WTC11 (cell line): ENCODE measurements at regions of chr18 and their contacts with region 1.

Region 1: DNA sequence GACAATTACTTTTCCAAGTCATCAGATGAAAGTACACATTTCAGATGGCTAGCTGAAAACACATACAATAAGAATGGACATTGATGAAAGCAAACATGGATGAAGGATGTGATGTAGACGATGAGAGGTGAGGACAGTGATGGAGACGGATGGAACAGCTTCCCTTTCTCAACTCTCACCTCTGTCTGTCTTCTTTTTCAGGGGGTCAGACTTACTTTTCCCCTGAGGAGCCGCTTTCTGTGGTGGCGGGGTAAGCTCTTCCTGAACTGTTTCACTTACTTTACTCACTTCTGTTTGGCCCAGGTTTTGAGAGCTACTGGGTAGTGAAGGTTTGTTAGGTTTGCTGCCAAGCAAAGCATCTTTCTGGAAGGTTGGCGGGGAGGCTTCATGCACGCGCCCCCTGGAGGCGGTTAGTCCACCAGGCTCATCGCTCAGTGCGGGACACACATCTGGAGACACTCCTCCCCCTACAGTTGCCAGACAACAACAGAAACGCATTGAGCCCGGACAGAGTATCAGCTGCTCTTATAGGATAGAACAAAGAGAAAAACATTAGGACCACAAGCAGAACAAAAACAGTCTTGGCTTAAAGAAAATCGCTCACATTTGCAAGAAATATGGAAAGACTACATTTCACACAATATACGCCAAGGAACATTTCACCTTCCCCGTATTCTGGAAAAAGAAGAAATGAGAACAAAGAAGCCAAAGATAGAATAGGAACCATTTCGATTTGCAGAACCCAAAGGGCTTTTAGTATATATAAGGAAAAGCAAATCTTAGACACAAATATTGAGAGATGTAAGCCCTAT is 90.5 kb downstream of the MYOM1 start:
- DNase-seq: peak; percentile 90
- ATAC-seq: peak; percentile 100
- H3K4me3 Mint-ChIP-seq: no peak overlapping the region
- H3K27ac Mint-ChIP-seq: peak overlapping the region; percentile 24; the same call in 1 of the 2 replicates
- H3K4me1 Mint-ChIP-seq: peaks cover 9% of the 10 kb centered on the region
- H3K27me3 Mint-ChIP-seq: no peaks in the 10 kb centered on the region
- CTCF ChIP-seq: peak; percentile 77

Region 2: DNA sequence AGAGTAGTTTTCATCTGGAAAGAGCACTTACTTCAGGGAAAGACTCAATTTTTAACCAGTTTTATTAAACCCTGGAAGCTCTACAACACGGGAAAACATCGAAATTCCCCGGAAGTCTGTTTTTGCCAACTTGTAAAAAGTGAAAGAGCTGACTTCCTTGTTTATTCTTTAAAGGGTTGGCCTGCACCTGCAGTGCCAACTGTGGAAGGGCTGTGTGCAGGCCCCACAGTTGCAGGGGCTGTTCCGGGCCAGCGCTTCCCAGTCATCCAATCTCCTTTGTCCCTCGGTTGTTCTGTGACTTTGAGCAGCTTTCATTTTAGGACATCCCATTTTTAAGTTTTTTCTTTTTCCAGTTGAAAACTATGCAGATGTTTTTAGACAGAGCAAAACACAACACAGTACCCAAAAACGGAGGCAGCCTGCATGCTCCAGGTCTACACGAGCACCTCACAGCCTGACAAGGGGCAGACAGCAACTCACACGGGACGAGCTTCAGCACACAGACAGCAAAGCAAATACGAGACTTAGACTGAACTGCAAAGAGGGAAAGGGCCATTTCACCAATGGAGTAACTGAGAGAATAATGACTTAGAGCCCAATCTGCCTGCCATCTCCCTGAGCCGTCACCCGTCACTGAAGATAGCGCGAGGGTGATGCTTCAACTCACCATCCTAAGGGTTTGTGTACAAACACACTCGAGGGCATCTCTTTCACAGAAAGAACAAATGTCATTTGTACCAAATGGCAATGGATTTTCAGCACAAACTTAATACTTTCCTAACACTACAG is 211.8 kb before region 1 on chr18:
- CTCF ChIA-PET with region 1: interaction called, 10 read pairs
- POLR2A ChIA-PET with region 1: no interaction called
- DNase-seq: no peak
- ATAC-seq: no peak
- H3K4me3 Mint-ChIP-seq: 0 out of 2 replicates have a peak overlapping the region, but pooled peaks have one; percentile 30
- H3K27ac Mint-ChIP-seq: peak overlapping the region; percentile 96
- H3K4me1 Mint-ChIP-seq: peaks cover 57% of the 10 kb centered on the region
- H3K27me3 Mint-ChIP-seq: no peaks in the 10 kb centered on the region
- CTCF ChIP-seq: no peak

Region 3: GRCh38 chr18:2960983-2961696 is 168.1 kb before region 1 on chr18:
- CTCF ChIA-PET with region 1: no interaction called
- POLR2A ChIA-PET with region 1: no interaction called
- DNase-seq: no peak
- ATAC-seq: no peak
- H3K4me3 Mint-ChIP-seq: no peak overlapping the region
- H3K27ac Mint-ChIP-seq: peak overlapping the region; percentile 2; the same call in 1 of the 2 replicates
- H3K4me1 Mint-ChIP-seq: no peaks in the 10 kb centered on the region
- H3K27me3 Mint-ChIP-seq: no peaks in the 10 kb centered on the region
- CTCF ChIP-seq: no peak

Region 4: DNA sequence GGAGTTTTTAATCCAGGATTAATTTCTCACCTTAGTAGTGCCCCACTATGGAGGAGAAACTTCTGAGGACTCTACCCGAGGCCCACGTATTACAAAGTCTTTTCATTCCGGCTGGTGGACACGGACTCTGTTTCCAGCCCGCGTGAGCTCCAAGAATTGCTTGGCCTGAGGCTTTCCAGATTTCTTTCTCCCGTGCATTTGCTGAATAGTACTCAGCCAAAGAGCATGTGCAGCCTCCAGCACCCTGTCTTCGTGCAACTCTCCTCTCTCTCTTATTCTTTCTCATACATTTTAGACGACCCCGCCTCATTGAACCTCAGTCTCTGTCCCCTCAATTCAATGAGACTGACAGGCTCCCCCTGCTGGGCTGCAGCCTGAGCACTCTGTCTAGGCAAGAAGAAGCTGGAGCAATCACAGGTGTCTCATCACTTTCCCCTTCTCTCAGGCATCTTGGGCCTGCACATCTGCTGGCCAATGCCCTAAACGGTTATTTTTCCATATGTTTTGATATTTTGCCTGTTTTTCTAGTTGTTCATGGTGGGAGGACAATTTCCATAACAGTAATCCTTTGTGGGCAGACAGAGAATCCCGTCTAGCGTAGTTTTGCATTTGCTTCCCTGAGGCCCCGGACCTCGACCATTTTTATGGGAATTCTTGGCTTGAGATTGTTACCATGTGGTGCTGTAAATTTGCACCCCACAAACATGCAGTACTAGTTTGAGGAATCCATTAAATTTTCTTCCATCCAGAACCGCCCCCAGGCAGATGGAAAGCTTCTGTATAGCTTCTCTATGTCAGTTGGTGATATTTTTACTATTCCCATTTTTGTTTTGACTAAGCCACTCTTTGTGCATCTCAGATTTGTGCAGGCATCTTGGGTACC is 66.2 kb before region 1 on chr18:
- CTCF ChIA-PET with region 1: interaction called, 18 read pairs
- POLR2A ChIA-PET with region 1: no interaction called
- DNase-seq: peak; percentile 80
- ATAC-seq: peak; percentile 95
- H3K4me3 Mint-ChIP-seq: no peak overlapping the region
- H3K27ac Mint-ChIP-seq: no peak overlapping the region
- H3K4me1 Mint-ChIP-seq: peaks cover 12% of the 10 kb centered on the region
- H3K27me3 Mint-ChIP-seq: no peaks in the 10 kb centered on the region
- CTCF ChIP-seq: peak; percentile 17; the same call in 1 of the 2 replicates

Region 5: DNA sequence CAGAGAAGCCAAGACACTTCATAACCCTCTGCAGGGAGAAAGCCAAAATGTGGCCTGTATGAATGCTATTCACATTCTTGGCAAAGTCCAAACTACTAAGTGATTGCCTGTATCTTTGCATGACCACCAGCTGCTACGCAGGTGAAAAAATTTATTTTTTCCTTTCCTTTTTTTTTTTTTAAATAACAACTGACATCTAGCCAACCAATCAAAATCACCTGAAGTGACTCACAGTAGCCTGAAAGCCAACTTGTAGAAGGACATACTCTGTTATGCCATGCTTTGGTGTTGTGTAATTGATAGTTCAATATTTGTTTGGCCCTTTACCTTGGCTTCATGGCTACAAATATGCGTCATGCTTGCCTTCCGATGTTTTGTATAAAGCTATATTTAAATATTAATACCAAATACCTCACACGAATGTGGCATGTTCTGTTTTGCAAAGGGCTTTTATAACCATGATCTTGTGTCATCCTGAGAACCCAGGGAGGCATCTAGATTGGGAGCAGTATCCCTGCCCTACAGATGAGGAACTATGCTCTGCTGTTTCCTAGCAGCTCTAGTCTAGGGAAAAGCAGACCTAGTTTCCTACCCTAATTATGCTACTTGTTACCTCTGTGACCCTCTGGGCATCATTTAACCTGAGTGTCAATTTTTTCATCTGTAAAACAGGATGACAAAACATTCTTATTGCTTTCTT is 11.6 kb before region 1 on chr18:
- CTCF ChIA-PET with region 1: interaction called, 21 read pairs
- POLR2A ChIA-PET with region 1: interaction called, 3 read pairs
- DNase-seq: no peak
- ATAC-seq: no peak
- H3K4me3 Mint-ChIP-seq: no peak overlapping the region
- H3K27ac Mint-ChIP-seq: no peak overlapping the region
- H3K4me1 Mint-ChIP-seq: peaks cover 19% of the 10 kb centered on the region
- H3K27me3 Mint-ChIP-seq: peaks cover 31% of the 10 kb centered on the region
- CTCF ChIP-seq: no peak

Region 6: GRCh38 chr18:3177902-3178687 is 48.8 kb after region 1 on chr18:
- CTCF ChIA-PET with region 1: interaction called, 10 read pairs
- POLR2A ChIA-PET with region 1: no interaction called
- DNase-seq: no peak
- ATAC-seq: no peak
- H3K4me3 Mint-ChIP-seq: no peak overlapping the region
- H3K27ac Mint-ChIP-seq: no peak overlapping the region
- H3K4me1 Mint-ChIP-seq: peaks cover 14% of the 10 kb centered on the region
- H3K27me3 Mint-ChIP-seq: no peaks in the 10 kb centered on the region
- CTCF ChIP-seq: no peak